ENCODE measurements at regions of chr20 and their contacts with region 1.

Region 1: DNA sequence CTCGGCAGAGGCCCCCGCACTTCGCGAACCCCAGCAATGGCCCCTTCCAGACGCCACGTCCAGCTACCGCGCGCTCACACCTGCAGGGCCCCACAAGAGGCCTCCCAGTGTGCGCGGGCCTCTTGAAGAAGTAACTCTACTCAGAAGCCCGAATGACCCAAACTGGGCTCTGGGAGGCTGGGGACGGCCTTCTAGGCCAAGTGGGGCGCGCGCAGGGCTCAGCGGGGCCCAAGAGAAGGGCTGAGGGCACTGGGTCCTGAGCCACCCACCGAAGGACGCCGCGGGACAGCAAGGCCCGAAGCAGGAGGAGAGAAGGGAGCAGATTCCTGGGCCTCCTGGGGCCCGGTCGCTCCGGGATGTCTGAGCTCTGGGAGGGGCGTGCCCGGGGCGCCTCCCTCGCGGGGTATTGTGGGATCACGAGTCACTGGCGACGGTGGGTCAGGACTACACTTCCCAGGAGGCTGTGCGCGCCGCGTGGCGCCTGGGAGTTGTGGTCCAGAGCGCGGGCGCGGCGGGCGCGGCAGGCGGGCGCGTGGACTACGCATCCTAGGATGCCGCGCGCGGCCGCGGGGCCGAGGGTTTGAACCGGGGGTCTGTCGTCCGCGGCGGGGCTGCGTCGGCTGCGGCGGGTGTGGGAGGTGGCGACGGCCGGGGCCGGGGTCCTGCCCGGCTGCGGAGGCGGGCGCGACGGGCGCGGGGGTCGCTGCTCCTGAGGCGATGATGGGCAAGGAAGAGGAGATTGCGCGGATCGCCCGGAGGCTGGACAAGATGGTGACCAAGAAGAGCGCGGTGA is at the start of gene TCEA2:
- DNase-seq: peak; percentile 95 to 100 (median 99)

Region 2: GRCh38 chr20:63894358-63895201 is 168.2 kb before region 1 on chr20 and contains the start of gene DNAJC5:
- intact Hi-C with region 1: loop called (anchors 5 kb)
- DNase-seq: peak; percentile 92 to 100 (median 96)

Region 3: GRCh38 chr20:63980806-63981728 is 81.7 kb before region 1 on chr20 and contains the start of gene PRPF6:
- intact Hi-C with region 1: loop called (anchors 5 kb)
- DNase-seq: peak; percentile 90 to 99 (median 96)